Adrenal gland (tissue), 19 donors: ENCODE measurements at regions of chr12 and their contacts with region 1.

Region 1: GRCh38 chr12:26097046-26097878 is 27.6 kb downstream of the BHLHE41 start:
- DNase-seq: peak; percentile 76 to 84 (median 79)
- H3K4me3 ChIP-seq: no peak overlapping the region
- H3K27ac ChIP-seq: no peak overlapping the region
- H3K4me1 ChIP-seq: peaks cover 0 to 6% of the 10 kb centered on the region in 2 donors
- H3K27me3 ChIP-seq: no peaks in the 10 kb centered on the region
- CTCF ChIP-seq: peak; percentile 88 to 98 (median 90)
- POLR2A ChIP-seq: no peak

Region 2: GRCh38 chr12:25914607-25915006 is 182.7 kb before region 1 on chr12:
- intact Hi-C with region 1: no loop called
- DNase-seq: no peak
- H3K4me3 ChIP-seq: no peak overlapping the region
- H3K27ac ChIP-seq: no peak overlapping the region
- H3K4me1 ChIP-seq: no peaks in the 10 kb centered on the region
- H3K27me3 ChIP-seq: no peaks in the 10 kb centered on the region
- CTCF ChIP-seq: no peak
- POLR2A ChIP-seq: no peak

Region 3: DNA sequence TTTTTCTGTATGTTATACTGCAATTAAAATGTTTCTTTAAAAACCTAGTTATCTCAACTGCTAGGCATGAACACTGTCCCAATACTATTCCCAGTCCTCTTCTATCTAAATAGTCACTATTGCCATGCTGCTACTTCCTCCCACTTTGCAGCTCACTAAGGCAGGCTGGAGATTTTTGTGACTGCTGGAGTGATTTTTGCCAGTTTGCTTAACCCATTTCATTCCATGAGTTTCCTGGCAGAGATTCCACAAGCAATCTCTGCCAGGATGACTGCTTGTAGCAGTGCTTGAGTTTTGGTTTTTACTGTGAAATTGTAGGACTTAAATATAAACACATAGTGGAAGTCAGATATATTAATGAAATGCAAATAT is 53.3 kb before region 1 on chr12:
- intact Hi-C with region 1: no loop called
- DNase-seq: no peak
- H3K4me3 ChIP-seq: no peak overlapping the region
- H3K27ac ChIP-seq: no peak overlapping the region
- H3K4me1 ChIP-seq: peaks cover 0 to 15% of the 10 kb centered on the region in 2 donors
- H3K27me3 ChIP-seq: no peaks in the 10 kb centered on the region
- CTCF ChIP-seq: no peak
- POLR2A ChIP-seq: no peak

Region 4: GRCh38 chr12:26523708-26524150 is 426.5 kb after region 1 on chr12:
- intact Hi-C with region 1: loop called in 1 of 2 experiments (anchors 10 kb)
- DNase-seq: peak; percentile 92 to 99 (median 98)
- H3K4me3 ChIP-seq: no peak overlapping the region
- H3K27ac ChIP-seq: peak overlapping the region; percentile 66 to 86 (median 71)
- H3K4me1 ChIP-seq: peaks cover 7 to 9% of the 10 kb centered on the region in 2 donors
- H3K27me3 ChIP-seq: no peaks in the 10 kb centered on the region
- CTCF ChIP-seq: peak in 4 of 6 experiments; percentile 20 to 57 (median 44)
- POLR2A ChIP-seq: peak in 1 of 2 donors; percentile 53

Region 5: GRCh38 chr12:26651566-26652188 is 554.4 kb after region 1 on chr12:
- intact Hi-C with region 1: loop called in 1 of 2 experiments (anchors 10 kb)
- DNase-seq: peak; percentile 37 to 78 (median 64)
- H3K4me3 ChIP-seq: no peak overlapping the region
- H3K27ac ChIP-seq: no peak overlapping the region
- H3K4me1 ChIP-seq: no peaks in the 10 kb centered on the region
- H3K27me3 ChIP-seq: no peaks in the 10 kb centered on the region
- CTCF ChIP-seq: peak; percentile 67 to 82 (median 75)
- POLR2A ChIP-seq: no peak

Region 6: DNA sequence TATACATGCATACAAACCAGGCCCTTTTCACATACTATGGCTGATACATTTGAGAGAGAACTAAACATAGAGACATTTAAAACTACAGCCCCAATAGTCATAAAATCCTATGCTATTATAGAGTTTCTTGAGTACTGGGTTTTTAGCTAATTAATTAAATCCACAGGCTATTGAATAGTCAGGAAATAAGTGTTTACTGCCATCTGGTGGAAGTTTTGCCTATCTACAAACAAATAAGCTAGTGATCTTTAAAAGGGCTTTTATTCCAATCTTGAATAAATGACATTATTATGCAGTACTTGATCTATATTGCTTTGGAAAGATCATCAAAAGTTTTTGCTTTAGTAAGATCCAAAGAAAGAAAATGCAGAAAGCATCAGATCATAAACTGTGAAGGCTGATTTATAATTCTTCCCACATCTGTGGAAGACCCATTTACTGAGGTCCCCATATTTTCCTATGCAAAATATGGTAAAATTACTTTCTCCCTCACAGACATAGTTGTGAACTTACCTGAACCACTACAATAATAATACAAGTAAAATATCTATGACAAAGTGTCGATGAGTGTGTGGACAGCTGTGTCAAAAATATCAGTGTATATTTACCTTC is 604.4 kb after region 1 on chr12:
- intact Hi-C with region 1: loop called in 1 of 2 experiments (anchors 5 kb)
- DNase-seq: no peak
- H3K4me3 ChIP-seq: no peak overlapping the region
- H3K27ac ChIP-seq: no peak overlapping the region
- H3K4me1 ChIP-seq: peaks cover 0 to 16% of the 10 kb centered on the region in 2 donors
- H3K27me3 ChIP-seq: no peaks in the 10 kb centered on the region
- CTCF ChIP-seq: peak; percentile 46 to 76 (median 62)
- POLR2A ChIP-seq: no peak